ENCODE measurements at regions of chr18 and their contacts with region 1.

Region 1: DNA sequence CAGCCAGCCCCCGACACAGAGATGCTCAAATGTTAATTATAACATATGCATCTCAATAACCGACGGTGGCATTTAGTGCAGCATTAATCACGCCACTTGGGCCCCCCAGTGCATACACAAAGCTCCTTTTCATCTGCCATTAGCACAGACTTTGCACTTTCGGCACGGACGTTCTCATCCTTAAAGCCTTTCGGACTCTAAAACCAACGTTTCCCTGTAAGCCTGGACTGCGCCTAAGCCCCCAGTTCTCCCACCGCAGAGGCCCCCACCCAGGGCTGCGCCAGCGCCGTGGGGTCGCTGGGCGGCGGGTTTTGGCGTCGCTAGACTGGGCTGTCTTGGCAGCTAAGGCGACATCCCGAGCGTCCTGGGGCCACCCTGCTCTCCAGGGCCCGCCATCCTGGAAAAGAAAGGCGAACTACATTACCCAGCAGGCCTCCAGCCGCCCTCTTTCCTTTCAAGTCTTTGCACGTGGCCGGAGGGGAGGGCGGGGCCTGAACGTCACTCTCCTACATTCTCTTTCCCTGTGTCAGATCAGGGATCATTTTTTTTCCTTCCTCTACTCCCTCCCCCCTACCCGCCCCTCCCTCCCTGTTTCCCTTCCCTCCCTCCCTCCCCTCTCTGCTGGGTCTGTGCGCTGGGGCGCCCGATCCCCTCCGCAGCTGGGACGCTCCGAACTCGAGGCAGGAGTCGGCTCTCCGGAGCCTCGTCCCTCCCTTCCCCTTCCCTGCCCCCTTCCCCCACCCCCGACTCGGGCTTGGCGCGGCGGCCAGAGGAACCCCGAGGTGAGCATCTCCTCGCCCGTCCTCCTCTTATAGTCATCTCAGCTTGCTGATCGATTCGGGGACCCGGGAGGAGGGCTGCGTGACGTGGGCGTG is at the start of gene CTIF:
- DNase-seq: peak; percentile 99
- H3K4me3 ChIP-seq: peak within 1 kb of the TSS; percentile 63 to 88 (median 69)
- H3K27ac ChIP-seq: peak within 1 kb of the TSS; percentile 92 to 98 (median 96)
- H3K4me1 ChIP-seq: peaks cover 0 to 31% (median 30%) of the 10 kb centered on the region in 4 donors
- H3K27me3 ChIP-seq: no peaks in the 10 kb centered on the region
- CTCF ChIP-seq: no peak
- EP300 ChIP-seq: no peak
- POLR2A ChIP-seq: peak; percentile 40 to 65
- total RNA-seq, gene CTIF: 22.5 to 65.9 (median 40.4) TPM

Region 2: DNA sequence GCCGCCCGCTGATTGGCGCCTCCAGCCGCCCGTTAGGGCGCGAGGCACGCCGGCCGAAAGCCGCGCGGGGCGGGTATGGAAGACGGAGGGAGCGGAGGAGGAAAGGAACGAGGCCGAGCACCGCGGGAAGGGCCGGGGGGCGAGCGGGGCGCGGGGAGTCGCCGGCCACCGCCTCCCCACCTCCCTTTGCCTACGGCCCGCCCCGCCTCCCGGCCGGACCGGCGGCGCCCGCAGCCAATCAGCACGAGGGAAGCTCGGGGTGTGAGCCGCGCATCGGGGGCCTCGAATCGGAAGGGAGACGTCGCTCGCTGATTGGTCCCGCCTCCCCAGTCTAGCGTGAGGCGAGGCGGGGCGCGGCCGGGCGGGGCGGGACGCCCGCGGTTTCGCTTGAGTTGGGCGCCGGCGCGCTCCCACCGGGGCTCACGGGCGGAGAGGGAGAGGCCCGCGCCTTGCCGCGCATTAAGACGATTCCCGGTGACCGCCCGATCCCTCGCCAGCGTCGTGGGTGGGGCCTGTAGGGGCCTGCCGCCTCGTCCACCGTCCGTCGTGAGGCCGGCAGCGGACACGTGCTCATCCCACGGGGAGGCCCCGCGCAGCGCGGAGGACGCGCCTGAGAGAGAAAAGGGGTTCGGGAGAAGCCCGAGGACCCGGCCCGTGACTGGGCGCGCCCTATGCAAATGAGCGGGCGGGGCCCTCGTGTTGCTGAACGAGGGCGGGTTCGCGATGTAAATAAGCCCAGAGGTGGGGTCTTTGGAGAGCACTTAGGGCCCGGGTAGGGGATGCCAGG is 607.6 kb before region 1 on chr18:
- intact Hi-C with region 1: loop called (anchors 10 kb)
- DNase-seq: peak; percentile 99
- H3K4me3 ChIP-seq: peak overlapping the region; percentile 44 to 89 (median 70)
- H3K27ac ChIP-seq: peak overlapping the region; percentile 87 to 96 (median 95)
- H3K4me1 ChIP-seq: peaks cover 0 to 40% (median 33%) of the 10 kb centered on the region in 4 donors
- H3K27me3 ChIP-seq: no peaks in the 10 kb centered on the region
- CTCF ChIP-seq: no peak
- EP300 ChIP-seq: no peak
- POLR2A ChIP-seq: peak; percentile 22 to 32

Region 3: DNA sequence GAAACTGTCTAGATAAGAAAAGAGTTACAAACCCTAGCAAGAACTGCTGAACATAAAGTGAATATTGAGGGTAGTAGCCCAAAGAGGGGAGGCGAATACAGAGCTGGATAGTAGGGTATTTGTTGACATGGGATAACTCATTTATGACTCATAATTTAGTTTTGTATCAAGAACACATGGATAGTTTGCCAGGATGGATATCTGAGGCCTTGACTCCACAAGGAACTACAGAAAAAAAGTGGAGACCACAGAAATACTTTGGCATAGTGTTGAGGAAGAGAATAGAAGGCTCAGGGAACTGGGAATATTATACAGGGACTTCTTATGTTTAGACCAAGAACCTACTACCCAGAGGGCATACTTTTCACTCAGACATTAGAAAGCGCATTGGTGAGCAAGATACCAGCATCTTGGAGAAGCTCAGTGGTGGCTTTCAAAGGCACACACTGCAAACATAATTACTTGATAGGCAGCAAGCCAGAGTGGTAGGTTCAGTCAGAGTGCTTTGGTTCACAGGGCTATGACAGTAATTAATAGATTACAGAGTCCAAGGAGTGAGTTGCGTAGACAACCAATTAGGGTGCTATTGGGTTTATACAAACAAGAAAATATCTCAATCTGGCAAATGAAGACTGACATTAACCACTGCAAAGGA is 77.7 kb before region 1 on chr18:
- intact Hi-C with region 1: no loop called
- DNase-seq: no peak
- H3K4me3 ChIP-seq: no peak overlapping the region
- H3K27ac ChIP-seq: no peak overlapping the region
- H3K4me1 ChIP-seq: no peaks in the 10 kb centered on the region
- H3K27me3 ChIP-seq: no peaks in the 10 kb centered on the region
- CTCF ChIP-seq: no peak
- EP300 ChIP-seq: no peak
- POLR2A ChIP-seq: no peak

Region 4: GRCh38 chr18:48475635-48476549 is 62.9 kb before region 1 on chr18:
- intact Hi-C with region 1: loop called (anchors 10 kb)
- DNase-seq: no peak
- H3K4me3 ChIP-seq: no peak overlapping the region
- H3K27ac ChIP-seq: no peak overlapping the region
- H3K4me1 ChIP-seq: peaks cover 0 to 4% (median 0%) of the 10 kb centered on the region in 4 donors
- H3K27me3 ChIP-seq: no peaks in the 10 kb centered on the region
- CTCF ChIP-seq: peak; percentile 43 to 88 (median 78)
- EP300 ChIP-seq: no peak
- POLR2A ChIP-seq: no peak

Region 5: DNA sequence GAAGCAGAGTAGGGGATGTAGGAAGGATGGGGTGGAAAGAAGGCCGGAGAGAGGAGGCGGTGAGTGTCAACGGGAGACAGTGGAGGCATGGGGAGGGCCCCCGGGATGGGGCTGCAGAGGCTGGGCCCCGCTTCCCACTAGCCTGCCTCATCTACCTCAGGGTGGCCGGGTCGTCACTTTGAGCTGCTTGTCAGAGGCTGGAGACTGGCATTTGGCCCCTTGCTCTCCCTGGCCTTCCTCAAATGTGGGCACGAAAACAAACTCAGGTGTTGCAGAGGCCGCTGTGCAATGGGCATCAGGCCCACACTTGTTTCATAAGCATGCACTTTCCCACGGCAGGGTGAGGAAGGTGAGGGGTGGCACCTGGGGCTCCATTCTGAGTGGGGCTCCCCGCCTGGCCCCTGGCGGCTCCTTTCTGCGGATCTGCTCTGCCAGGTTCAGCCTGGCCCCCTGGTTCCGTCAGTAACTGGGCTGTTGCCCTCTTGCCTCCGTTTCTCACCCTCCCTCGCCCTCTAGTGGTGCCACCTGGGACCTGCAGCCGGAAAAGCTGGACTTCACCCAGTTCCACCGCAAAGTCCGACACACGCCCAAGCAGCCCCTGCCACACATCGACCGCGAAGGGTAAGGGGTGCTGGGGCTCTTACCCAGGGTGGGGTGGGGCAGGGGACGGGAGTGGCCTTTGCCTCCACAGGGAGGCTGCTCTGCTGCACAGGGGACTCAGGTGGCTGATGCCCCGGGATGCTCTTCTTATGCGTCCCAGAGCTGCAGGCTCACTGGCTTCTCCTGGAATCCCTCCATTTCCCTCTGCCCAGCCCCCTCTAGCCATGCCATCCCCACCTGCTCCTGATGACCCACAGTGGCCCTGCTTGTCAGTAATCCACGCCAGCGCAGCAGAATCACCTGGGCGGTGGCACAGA is 125.4 kb after region 1 on chr18:
- intact Hi-C with region 1: loop called (anchors 5 kb)
- DNase-seq: peak; percentile 86
- H3K4me3 ChIP-seq: no peak overlapping the region
- H3K27ac ChIP-seq: peak overlapping the region in 2 of 4 donors; percentile 18 to 43
- H3K4me1 ChIP-seq: peaks cover 0 to 34% (median 18%) of the 10 kb centered on the region in 4 donors
- H3K27me3 ChIP-seq: no peaks in the 10 kb centered on the region
- CTCF ChIP-seq: peak; percentile 71 to 92 (median 88)
- EP300 ChIP-seq: no peak
- POLR2A ChIP-seq: no peak

Region 6: DNA sequence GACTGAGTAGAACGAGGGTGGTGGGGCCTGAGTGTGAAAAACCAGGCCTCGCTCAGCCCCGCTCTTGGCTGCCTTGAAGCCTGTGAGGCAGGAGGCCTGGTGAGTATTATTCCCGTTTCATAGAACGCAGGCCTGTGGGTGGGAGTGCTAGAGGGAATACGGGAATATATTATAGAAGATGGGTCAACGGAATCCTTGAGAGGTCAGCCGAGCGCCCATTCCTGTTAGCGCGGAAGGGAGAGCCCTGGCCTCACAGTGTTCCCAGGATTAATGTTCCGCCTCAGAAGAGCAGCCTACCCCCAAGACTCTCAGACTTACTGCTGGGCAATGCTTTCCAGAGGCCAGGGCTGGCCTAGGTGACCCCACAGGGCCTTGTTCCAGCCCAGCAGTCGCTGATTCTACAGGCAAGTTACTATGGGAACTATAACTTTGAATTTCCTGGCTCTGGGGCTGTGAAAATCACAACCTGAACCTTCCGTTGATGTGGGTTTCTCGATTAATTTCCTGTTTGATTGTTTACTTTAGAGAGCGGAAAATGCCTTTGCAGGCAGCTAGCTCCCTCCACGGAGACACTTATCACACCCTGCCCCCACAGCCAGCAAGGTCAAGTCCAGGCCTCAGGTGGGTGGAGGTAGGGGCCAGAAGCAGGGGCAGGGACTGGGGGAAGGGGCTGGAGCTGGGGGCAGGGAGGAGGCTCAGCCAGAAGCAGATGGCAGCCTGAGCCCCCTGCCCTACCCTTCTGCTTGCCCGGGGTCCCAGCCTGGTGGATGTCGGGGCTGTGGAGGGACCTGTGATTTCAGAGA is 303.7 kb after region 1 on chr18:
- intact Hi-C with region 1: no loop called
- DNase-seq: no peak
- H3K4me3 ChIP-seq: no peak overlapping the region
- H3K27ac ChIP-seq: peak overlapping the region in 3 of 4 donors; percentile 40 to 64 (median 47)
- H3K4me1 ChIP-seq: peaks cover 0 to 30% (median 6%) of the 10 kb centered on the region in 4 donors
- H3K27me3 ChIP-seq: no peaks in the 10 kb centered on the region
- CTCF ChIP-seq: no peak
- EP300 ChIP-seq: no peak
- POLR2A ChIP-seq: no peak

Region 7: DNA sequence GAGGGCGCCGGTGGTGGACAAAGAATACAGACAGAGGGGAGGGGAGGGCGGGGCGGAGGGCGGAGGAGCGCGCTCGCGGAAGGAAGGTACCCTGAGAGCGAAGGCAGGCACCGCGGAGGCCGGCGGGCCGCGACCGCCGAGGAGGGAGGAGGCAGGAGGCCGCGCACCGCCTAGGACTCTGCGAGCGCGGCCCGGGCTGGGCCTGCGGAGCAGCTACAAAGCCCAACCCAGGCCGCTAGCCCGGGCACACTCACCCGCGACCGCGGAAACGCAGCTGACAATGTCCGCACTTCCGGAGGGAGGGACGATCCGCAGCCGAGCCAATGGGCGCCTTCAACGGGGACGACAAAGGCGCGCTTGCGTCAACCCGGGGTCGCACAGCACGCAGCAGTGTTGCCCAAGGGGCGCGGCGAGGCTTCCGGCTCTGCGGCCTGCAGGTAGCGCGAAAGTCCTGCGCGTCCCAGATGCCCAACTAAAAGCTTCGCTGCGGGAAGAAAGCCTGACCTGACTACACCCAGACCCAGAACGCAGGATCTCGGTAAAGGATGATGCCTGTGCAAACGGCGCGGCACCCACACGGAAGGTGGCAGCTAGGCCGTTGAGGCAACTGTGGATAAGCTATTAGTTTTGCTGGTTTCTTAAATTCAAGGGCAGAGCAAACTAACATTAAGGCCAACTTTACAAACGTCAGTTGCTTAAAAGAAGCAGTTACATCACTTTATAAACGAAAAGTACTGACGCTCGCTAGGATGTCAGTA is 948.4 kb after region 1 on chr18 and contains the start of gene C18orf32:
- intact Hi-C with region 1: loop called (anchors 5 kb)
- DNase-seq: peak; percentile 98
- H3K4me3 ChIP-seq: peak within 1 kb of the TSS; percentile 67 to 92 (median 86)
- H3K27ac ChIP-seq: peak within 1 kb of the TSS; percentile 93 to 98 (median 96)
- H3K4me1 ChIP-seq: peaks cover 0 to 46% (median 37%) of the 10 kb centered on the region in 4 donors
- H3K27me3 ChIP-seq: no peaks in the 10 kb centered on the region
- CTCF ChIP-seq: no peak
- EP300 ChIP-seq: no peak
- POLR2A ChIP-seq: peak; percentile 92 to 94
- total RNA-seq, gene C18orf32: 29.1 to 57.8 (median 45.8) TPM

Region 8: GRCh38 chr18:50287441-50288347 is 1748.9 kb after region 1 on chr18 and contains the start of gene CXXC1:
- intact Hi-C with region 1: loop called (anchors 10 kb)
- DNase-seq: peak; percentile 99
- H3K4me3 ChIP-seq: peak within 1 kb of the TSS; percentile 68 to 85 (median 75)
- H3K27ac ChIP-seq: peak within 1 kb of the TSS; percentile 81 to 88 (median 86)
- H3K4me1 ChIP-seq: peaks cover 0 to 12% (median 8%) of the 10 kb centered on the region in 4 donors
- H3K27me3 ChIP-seq: no peaks in the 10 kb centered on the region
- CTCF ChIP-seq: peak; percentile 43 to 49 (median 47)
- EP300 ChIP-seq: peak in 1 of 4 donors; percentile 11
- POLR2A ChIP-seq: peak in 1 of 2 donors; percentile 22
- total RNA-seq, gene CXXC1: 34.2 to 58.9 (median 51.1) TPM

Measured in sigmoid colon (tissue), 7 donors.